ENCODE measurements at regions of chr4 and their contacts with region 1.

Region 1: DNA sequence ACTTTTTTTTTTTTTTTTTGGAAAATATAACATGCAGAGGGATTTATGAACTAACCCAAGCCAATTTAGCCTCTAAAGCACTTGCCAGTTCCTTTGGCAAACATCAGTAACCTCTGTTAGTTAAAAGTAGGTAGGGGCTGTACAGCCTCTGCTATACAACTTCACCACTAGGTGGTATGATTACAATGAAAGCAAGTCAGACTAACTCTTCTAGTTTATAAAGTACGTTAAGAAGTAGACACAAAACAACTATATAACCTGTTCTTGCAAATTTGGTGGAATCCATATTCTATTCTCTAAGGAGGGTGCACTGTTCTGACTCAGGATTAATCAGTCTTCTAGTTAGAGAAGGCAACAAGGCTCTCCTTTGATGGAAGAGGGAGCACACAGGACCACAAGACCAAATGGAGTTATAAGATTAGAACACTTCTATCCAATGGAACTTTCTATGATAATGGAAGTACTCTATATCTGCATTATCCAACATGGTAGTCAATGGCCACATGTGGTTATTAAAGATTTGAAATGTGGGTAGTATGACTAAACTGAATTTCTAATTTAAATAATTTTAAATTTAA is 12.8 kb downstream of the AIMP1 start:
- DNase-seq: no peak
- H3K4me3 ChIP-seq: no peak overlapping the region
- H3K27ac ChIP-seq: no peak overlapping the region
- H3K4me1 ChIP-seq: no peaks in the 10 kb centered on the region
- H3K27me3 ChIP-seq: no peaks in the 10 kb centered on the region
- CTCF ChIP-seq: peak; percentile 65

Region 2: GRCh38 chr4:106344647-106344970 is 15.5 kb after region 1 on chr4:
- CTCF ChIA-PET with region 1: interaction called, 16 read pairs
- POLR2A ChIA-PET with region 1: no interaction called
- intact Hi-C with region 1: no loop called
- DNase-seq: no peak
- H3K4me3 ChIP-seq: no peak overlapping the region
- H3K27ac ChIP-seq: no peak overlapping the region
- H3K4me1 ChIP-seq: no peaks in the 10 kb centered on the region
- H3K27me3 ChIP-seq: no peaks in the 10 kb centered on the region
- CTCF ChIP-seq: no peak

Region 3: GRCh38 chr4:106355193-106355592 is 26.1 kb after region 1 on chr4:
- CTCF ChIA-PET with region 1: no interaction called
- POLR2A ChIA-PET with region 1: no interaction called
- intact Hi-C with region 1: no loop called
- DNase-seq: no peak
- H3K4me3 ChIP-seq: no peak overlapping the region
- H3K27ac ChIP-seq: no peak overlapping the region
- H3K4me1 ChIP-seq: no peaks in the 10 kb centered on the region
- H3K27me3 ChIP-seq: no peaks in the 10 kb centered on the region
- CTCF ChIP-seq: no peak

Region 4: DNA sequence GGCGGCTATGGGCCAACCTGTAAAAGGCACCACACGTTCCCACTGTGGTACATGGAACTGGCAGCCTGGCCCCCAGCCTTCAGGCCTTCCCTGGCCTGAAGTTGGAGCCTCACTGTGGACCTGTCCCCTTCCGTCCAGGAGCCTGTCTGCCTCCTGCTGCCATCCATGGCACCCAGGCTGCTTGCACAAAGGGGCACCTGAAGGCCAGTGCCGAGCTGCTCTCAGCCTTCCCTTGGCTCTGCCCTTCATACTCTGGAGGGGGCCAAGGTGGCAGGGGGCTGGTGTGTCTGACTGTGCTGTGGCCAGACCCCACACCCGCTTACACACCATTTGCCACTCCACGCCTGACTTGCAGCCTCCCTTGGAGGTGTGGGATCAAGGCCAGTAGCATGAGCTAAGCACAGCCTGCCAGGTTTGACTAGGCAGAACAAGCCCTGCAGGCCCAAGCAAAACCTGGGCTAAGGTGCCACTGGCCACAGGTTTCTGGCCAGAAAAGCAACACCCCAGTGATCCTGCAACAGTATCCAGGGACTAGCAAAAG is 56.8 kb after region 1 on chr4:
- CTCF ChIA-PET with region 1: no interaction called
- POLR2A ChIA-PET with region 1: interaction called, 11 read pairs
- intact Hi-C with region 1: no loop called
- DNase-seq: no peak
- H3K4me3 ChIP-seq: no peak overlapping the region
- H3K27ac ChIP-seq: no peak overlapping the region
- H3K4me1 ChIP-seq: no peaks in the 10 kb centered on the region
- H3K27me3 ChIP-seq: no peaks in the 10 kb centered on the region
- CTCF ChIP-seq: no peak

Region 5: GRCh38 chr4:106898621-106899230 is 569.6 kb after region 1 on chr4:
- CTCF ChIA-PET with region 1: no interaction called
- POLR2A ChIA-PET with region 1: no interaction called
- intact Hi-C with region 1: loop called (anchors 2 kb)
- DNase-seq: peak in 1 of 2 experiments; percentile 7
- H3K4me3 ChIP-seq: no peak overlapping the region
- H3K27ac ChIP-seq: no peak overlapping the region
- H3K4me1 ChIP-seq: no peaks in the 10 kb centered on the region
- H3K27me3 ChIP-seq: no peaks in the 10 kb centered on the region
- CTCF ChIP-seq: peak; percentile 68

Measured in PC-9 (cell line).